Cardiac septum (tissue), 1 donor: ENCODE measurements at regions of chr2 and their contacts with region 1.

Region 1: GRCh38 chr2:33577668-33578067 is 21.4 kb downstream of the FAM98A start:
- DNase-seq: no peak

Region 2: GRCh38 chr2:32564417-32565035 is 1013.1 kb before region 1 on chr2:
- intact Hi-C with region 1: loop called (anchors 10 kb)
- DNase-seq: no peak